ENCODE measurements at regions of chr11 and their contacts with region 1.

Region 1: DNA sequence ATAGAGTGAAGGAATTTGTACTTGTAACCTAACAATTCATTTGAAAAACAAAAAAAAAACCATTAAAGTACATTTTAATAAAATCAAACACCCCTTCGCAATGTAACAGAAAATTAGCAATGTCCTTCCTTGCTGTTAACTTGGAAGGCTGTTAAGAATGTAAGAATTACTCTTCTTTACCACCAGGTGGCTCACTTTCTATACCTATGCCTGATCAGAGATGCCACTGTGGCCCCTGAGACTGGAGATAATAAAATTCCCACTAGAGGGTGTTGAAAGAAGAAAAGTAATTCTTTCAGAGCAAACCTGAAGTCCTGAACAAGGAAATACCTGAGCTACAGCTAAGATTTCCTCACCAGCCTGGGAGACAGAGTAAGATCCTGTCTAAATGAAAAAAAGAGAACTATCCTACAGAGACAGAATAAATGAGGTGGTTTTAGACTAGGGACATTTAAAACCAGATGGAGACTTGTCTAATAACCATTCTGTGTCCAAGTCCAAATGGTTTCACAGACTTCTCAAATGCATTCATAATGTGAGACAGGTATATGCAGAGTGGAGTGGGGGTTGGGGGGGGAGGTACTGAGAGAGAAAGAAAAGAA is 1089.3 kb downstream of the FAM181B start:
- DNase-seq: peak; percentile 11 to 55
- H3K4me3 ChIP-seq: no peak overlapping the region
- H3K27ac ChIP-seq: no peak overlapping the region
- H3K4me1 ChIP-seq: no peaks in the 10 kb centered on the region
- H3K27me3 ChIP-seq: no peaks in the 10 kb centered on the region
- CTCF ChIP-seq: peak; percentile 91

Region 2: GRCh38 chr11:81420668-81421550 is 223.4 kb before region 1 on chr11:
- CTCF ChIA-PET with region 1: no interaction called
- POLR2A ChIA-PET with region 1: no interaction called
- intact Hi-C with region 1: no loop called
- DNase-seq: no peak
- H3K4me3 ChIP-seq: no peak overlapping the region
- H3K27ac ChIP-seq: no peak overlapping the region
- H3K4me1 ChIP-seq: no peaks in the 10 kb centered on the region
- H3K27me3 ChIP-seq: no peaks in the 10 kb centered on the region
- CTCF ChIP-seq: no peak

Region 3: GRCh38 chr11:82229341-82229740 is 585.0 kb after region 1 on chr11:
- CTCF ChIA-PET with region 1: interaction called, 3 read pairs
- POLR2A ChIA-PET with region 1: no interaction called
- intact Hi-C with region 1: loop called (anchors 1 kb)
- DNase-seq: no peak
- H3K4me3 ChIP-seq: no peak overlapping the region
- H3K27ac ChIP-seq: no peak overlapping the region
- H3K4me1 ChIP-seq: no peaks in the 10 kb centered on the region
- H3K27me3 ChIP-seq: no peaks in the 10 kb centered on the region
- CTCF ChIP-seq: peak; percentile 65

Region 4: GRCh38 chr11:82698576-82699352 is 1054.4 kb after region 1 on chr11:
- CTCF ChIA-PET with region 1: interaction called, 7 read pairs
- POLR2A ChIA-PET with region 1: no interaction called
- intact Hi-C with region 1: loop called (anchors 1 kb)
- DNase-seq: no peak
- H3K4me3 ChIP-seq: no peak overlapping the region
- H3K27ac ChIP-seq: no peak overlapping the region
- H3K4me1 ChIP-seq: no peaks in the 10 kb centered on the region
- H3K27me3 ChIP-seq: no peaks in the 10 kb centered on the region
- CTCF ChIP-seq: no peak

Measured in PC-9 (cell line).